ENCODE measurements at regions of chr15 and their contacts with region 1.

Region 1: DNA sequence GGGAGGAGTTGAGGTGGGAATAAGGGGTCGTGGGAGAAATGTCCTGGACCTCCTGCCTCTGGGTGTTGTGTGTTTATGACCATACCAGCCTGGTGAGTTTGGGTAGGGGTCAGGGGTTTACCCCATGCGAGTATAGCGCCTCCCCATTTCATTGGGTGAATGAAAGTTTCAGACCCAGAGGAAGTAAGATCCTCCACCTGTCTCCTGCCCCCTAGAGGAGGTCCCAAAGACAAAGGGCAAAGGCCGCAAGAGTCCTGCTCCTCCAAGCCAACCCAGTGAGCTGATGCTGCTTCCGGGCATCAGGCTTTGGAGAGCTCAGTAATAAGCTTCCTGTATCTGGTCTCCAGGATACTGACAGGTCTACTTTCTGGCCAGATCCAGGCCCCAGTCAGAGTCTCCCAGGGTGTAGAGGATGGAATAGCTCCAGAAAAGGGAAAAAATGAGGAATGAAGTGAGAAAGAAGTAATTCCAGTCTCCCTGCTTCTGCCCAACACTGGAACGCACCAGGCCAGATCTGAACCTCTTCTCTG is 6.4 kb upstream of the TBC1D21 start:
- DNase-seq: peak; percentile 67
- ATAC-seq: peak; percentile 93
- H3K4me3 Mint-ChIP-seq: no peak overlapping the region
- H3K27ac Mint-ChIP-seq: no peak overlapping the region
- H3K4me1 Mint-ChIP-seq: peaks cover 37% of the 10 kb centered on the region
- H3K27me3 Mint-ChIP-seq: no peaks in the 10 kb centered on the region
- CTCF ChIP-seq: no peak; the same call in 1 of the 2 replicates

Region 2: DNA sequence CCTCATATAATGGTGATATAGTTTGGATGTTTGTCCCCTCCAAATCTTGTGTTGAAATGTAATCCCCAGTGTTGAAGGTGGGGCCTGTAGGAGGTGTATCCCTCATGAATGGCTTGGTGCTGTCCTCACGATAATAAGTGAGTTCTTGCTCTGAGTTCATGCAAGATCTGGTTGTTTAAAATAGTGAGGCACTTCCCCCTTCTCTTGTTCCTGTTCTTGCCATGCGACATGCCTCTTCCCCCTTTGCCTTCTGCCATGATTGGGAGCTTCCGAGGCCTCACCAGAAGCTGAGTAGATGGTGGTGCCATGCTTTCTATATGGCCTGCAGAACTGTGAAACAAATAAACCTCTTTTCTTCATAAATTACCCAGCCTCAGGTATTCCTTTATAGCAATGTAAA is 384.8 kb before region 1 on chr15:
- CTCF ChIA-PET with region 1: no interaction called
- POLR2A ChIA-PET with region 1: no interaction called
- DNase-seq: no peak
- ATAC-seq: no peak
- H3K4me3 Mint-ChIP-seq: no peak overlapping the region
- H3K27ac Mint-ChIP-seq: no peak overlapping the region
- H3K4me1 Mint-ChIP-seq: no peaks in the 10 kb centered on the region
- H3K27me3 Mint-ChIP-seq: no peaks in the 10 kb centered on the region
- CTCF ChIP-seq: no peak

Region 3: GRCh38 chr15:73633111-73633990 is 233.6 kb before region 1 on chr15 and contains the start of gene NPTN:
- CTCF ChIA-PET with region 1: interaction called, 10 read pairs
- POLR2A ChIA-PET with region 1: no interaction called
- DNase-seq: peak; percentile 99
- ATAC-seq: peak; percentile 92
- H3K4me3 Mint-ChIP-seq: peak within 1 kb of the TSS; percentile 76
- H3K27ac Mint-ChIP-seq: peak within 1 kb of the TSS; percentile 97
- H3K4me1 Mint-ChIP-seq: peaks cover 57% of the 10 kb centered on the region
- H3K27me3 Mint-ChIP-seq: peaks cover 4% of the 10 kb centered on the region
- CTCF ChIP-seq: no peak
- total RNA-seq, gene NPTN: 96.1 to 116 TPM (median 102 TPM) in 3 replicates

Region 4: DNA sequence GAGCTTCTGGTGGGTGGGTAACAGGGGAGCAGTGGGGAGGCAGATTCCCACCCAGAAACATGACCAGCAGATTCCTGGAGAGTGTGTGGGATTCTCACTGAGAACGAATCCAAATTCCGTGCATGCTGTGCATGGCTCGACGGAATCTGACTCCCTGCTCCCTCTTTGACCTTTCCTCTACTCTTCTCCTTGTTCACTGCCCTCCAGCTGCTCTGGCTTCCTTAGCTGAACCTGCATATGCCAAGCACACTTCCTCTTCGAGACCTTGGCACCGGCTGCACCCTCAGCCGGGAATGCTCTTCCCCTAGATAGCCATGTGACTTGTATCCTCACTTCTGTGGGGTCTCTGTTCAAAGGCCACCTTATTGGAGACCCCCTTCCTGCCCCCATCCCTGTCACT is 120.1 kb before region 1 on chr15:
- CTCF ChIA-PET with region 1: interaction called, 11 read pairs
- POLR2A ChIA-PET with region 1: no interaction called
- DNase-seq: no peak
- ATAC-seq: no peak
- H3K4me3 Mint-ChIP-seq: no peak overlapping the region
- H3K27ac Mint-ChIP-seq: no peak overlapping the region
- H3K4me1 Mint-ChIP-seq: peaks cover 50% of the 10 kb centered on the region
- H3K27me3 Mint-ChIP-seq: peaks cover 14% of the 10 kb centered on the region
- CTCF ChIP-seq: no peak

Region 5: GRCh38 chr15:73786518-73786917 is 80.4 kb before region 1 on chr15:
- CTCF ChIA-PET with region 1: interaction called, 34 read pairs
- POLR2A ChIA-PET with region 1: no interaction called
- DNase-seq: peak; percentile 80
- ATAC-seq: peak; percentile 88
- H3K4me3 Mint-ChIP-seq: no peak overlapping the region
- H3K27ac Mint-ChIP-seq: peak overlapping the region; percentile 74
- H3K4me1 Mint-ChIP-seq: peaks cover 57% of the 10 kb centered on the region
- H3K27me3 Mint-ChIP-seq: peaks cover 4% of the 10 kb centered on the region
- CTCF ChIP-seq: no peak

Region 6: GRCh38 chr15:73844356-73844755 is 22.6 kb before region 1 on chr15:
- CTCF ChIA-PET with region 1: interaction called, 23 read pairs
- POLR2A ChIA-PET with region 1: no interaction called
- DNase-seq: no peak
- ATAC-seq: peak; percentile 48; the same call in 1 of the 2 replicates
- H3K4me3 Mint-ChIP-seq: no peak overlapping the region
- H3K27ac Mint-ChIP-seq: no peak overlapping the region
- H3K4me1 Mint-ChIP-seq: peaks cover 18% of the 10 kb centered on the region
- H3K27me3 Mint-ChIP-seq: peaks cover 4% of the 10 kb centered on the region; the same call in 1 of the 2 replicates
- CTCF ChIP-seq: no peak

Region 7: DNA sequence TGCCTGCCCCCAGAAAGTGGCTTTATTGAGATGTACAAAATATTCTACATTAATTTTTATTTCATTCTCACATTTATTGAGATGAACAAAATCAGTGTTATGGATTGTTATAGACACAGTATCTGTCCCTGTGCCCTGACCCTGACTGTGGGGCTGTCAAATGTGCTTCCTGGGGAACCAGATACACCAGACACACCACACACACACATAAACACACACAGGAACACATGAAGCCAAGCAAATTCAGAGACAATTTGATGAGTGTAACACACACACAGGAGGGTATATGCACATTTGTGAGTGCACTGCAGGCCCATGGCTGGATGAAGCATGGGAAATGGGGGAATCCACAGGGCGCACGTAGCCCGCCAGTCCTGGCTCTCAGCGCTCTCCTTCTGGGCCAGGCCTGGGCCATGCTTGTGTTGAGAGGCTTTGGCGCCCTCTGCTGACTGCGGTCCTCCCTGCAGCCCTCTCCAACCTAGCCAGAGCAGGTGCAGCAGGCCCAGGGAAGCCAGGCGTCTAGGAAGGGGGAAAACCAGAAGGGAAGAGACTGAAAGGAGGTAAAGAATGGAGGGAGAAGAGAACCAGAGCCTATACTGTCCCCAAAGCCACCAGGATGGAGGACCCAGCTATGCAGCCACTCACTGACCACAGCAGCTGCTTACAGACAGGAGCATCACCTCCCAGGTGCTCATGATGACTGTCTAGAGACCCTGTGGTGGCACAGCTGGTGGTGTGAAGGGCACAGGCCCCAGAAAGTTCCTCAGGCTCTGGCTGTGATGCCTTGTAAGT is 41.3 kb after region 1 on chr15:
- CTCF ChIA-PET with region 1: interaction called, 45 read pairs
- POLR2A ChIA-PET with region 1: no interaction called
- DNase-seq: peak; percentile 95
- ATAC-seq: peak; percentile 99
- H3K4me3 Mint-ChIP-seq: no peak overlapping the region
- H3K27ac Mint-ChIP-seq: no peak overlapping the region
- H3K4me1 Mint-ChIP-seq: peaks cover 5% of the 10 kb centered on the region
- H3K27me3 Mint-ChIP-seq: peaks cover 7% of the 10 kb centered on the region
- CTCF ChIP-seq: peak; percentile 86

Region 8: DNA sequence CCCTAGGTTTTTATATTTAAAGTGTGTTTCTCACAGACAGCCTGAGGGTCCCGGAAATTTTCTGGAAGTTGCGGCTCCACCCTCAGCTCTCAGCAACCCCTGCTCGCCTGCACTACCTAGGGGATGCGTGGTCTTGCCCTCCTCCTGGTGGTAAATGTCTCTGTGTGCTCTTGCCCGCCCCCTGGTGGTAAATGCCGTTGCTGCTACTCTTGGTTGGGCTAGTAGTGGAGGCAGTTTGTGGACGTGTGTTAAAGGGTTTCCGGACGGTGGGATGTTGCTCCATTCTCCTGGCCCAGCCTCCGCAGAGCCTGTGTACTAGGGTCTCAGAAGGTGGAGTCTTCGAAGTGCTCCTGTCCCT is 97.8 kb after region 1 on chr15:
- CTCF ChIA-PET with region 1: interaction called, 10 read pairs
- POLR2A ChIA-PET with region 1: no interaction called
- DNase-seq: peak; percentile 94
- ATAC-seq: peak; percentile 96
- H3K4me3 Mint-ChIP-seq: peak overlapping the region; percentile 50
- H3K27ac Mint-ChIP-seq: no peak overlapping the region
- H3K4me1 Mint-ChIP-seq: peaks cover 27% of the 10 kb centered on the region
- H3K27me3 Mint-ChIP-seq: no peaks in the 10 kb centered on the region
- CTCF ChIP-seq: peak; percentile 91